Tibial artery (tissue), 4 donors: ENCODE measurements at regions of chr10 and their contacts with region 1.

Region 1: GRCh38 chr10:52313933-52314816 is at the start of gene DKK1:
- DNase-seq: peak; percentile 28 to 72
- H3K4me3 ChIP-seq: peak within 1 kb of the TSS; percentile 48 to 63
- H3K27ac ChIP-seq: no peak within 1 kb of the TSS
- H3K4me1 ChIP-seq: peaks cover 0 to 24% (median 21%) of the 10 kb centered on the region in 4 donors
- H3K27me3 ChIP-seq: peaks cover 0 to 21% of the 10 kb centered on the region in 2 donors
- CTCF ChIP-seq: peak; percentile 52 to 60

Region 2: DNA sequence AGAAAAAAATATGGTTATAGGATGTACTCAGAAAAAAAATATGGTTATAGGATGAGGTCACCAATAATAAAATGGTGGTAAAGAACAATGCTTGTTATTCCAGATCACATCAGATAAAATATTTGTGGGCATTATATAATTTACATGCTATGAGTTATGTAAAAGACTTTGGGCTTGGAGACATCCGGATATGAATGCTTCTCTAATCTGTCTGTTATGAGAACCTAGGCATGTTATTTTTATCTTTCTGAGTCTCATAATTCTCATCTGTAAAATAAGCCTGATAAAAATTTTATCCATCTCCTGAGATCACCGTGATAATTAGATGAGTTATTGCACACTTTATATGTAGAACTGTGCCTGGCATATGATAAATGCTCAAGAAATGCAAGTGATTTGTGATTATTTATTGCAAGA is 37.7 kb after region 1 on chr10:
- intact Hi-C with region 1: no loop called
- DNase-seq: no peak
- H3K4me3 ChIP-seq: no peak overlapping the region
- H3K27ac ChIP-seq: no peak overlapping the region
- H3K4me1 ChIP-seq: no peaks in the 10 kb centered on the region
- H3K27me3 ChIP-seq: peaks cover 0 to 7% of the 10 kb centered on the region in 2 donors
- CTCF ChIP-seq: no peak

Region 3: GRCh38 chr10:52443419-52444388 is 129.5 kb after region 1 on chr10:
- intact Hi-C with region 1: no loop called
- DNase-seq: no peak
- H3K4me3 ChIP-seq: no peak overlapping the region
- H3K27ac ChIP-seq: no peak overlapping the region
- H3K4me1 ChIP-seq: no peaks in the 10 kb centered on the region
- H3K27me3 ChIP-seq: no peaks in the 10 kb centered on the region
- CTCF ChIP-seq: no peak

Region 4: GRCh38 chr10:52488606-52489485 is 174.7 kb after region 1 on chr10:
- intact Hi-C with region 1: loop called (anchors 5 kb)
- DNase-seq: no peak
- H3K4me3 ChIP-seq: no peak overlapping the region
- H3K27ac ChIP-seq: no peak overlapping the region
- H3K4me1 ChIP-seq: peaks cover 0 to 18% (median 5%) of the 10 kb centered on the region in 4 donors
- H3K27me3 ChIP-seq: no peaks in the 10 kb centered on the region
- CTCF ChIP-seq: peak; percentile 60 to 71

Region 5: DNA sequence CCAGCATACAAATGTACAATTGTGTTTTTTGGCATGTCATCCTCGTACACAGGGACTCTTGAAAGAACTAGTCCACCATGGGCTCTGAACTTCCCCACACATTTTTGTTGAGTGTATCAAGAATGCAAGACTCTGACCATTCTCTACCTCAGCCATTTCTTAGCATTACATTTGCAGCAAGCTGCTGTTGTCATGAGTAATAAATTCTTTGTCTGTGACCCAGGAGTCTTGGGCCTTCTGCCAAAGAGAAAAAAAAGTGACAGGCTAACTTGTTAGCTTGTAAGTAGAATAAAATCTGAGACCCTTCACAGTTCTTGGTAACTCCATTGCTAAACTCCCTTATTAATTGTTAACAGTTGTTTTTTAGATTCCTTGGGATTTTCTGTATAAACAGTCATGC is 1000.7 kb after region 1 on chr10:
- intact Hi-C with region 1: no loop called
- DNase-seq: no peak
- H3K4me3 ChIP-seq: no peak overlapping the region
- H3K27ac ChIP-seq: no peak overlapping the region
- H3K4me1 ChIP-seq: no peaks in the 10 kb centered on the region
- H3K27me3 ChIP-seq: no peaks in the 10 kb centered on the region
- CTCF ChIP-seq: no peak